Right ventricle myocardium inferior (tissue), 1 donor: ENCODE measurements at regions of chr1 and their contacts with region 1.

Region 1: GRCh38 chr1:145978854-145979759 is 14.6 kb downstream of the POLR3GL start:
- DNase-seq: peak; percentile 95
- ATAC-seq: peak; percentile 94

Region 2: GRCh38 chr1:145999321-146000241 is 20.5 kb after region 1 on chr1:
- intact Hi-C with region 1: loop called (anchors 1 kb)
- DNase-seq: no peak
- ATAC-seq: peak; percentile 41

Region 3: GRCh38 chr1:146012737-146013403 is 33.8 kb after region 1 on chr1:
- intact Hi-C with region 1: loop called (anchors 1 kb)
- DNase-seq: no peak
- ATAC-seq: peak; percentile 34

Region 4: GRCh38 chr1:146029117-146029516 is 50.0 kb after region 1 on chr1:
- intact Hi-C with region 1: no loop called
- DNase-seq: no peak
- ATAC-seq: no peak